ENCODE measurements at regions of chr7 and their contacts with region 1.

Region 1: GRCh38 chr7:79009647-79010046 is 443.8 kb downstream of the MAGI2 start:
- DNase-seq: no peak
- H3K4me3 ChIP-seq: no peak overlapping the region
- H3K27ac ChIP-seq: no peak overlapping the region
- H3K4me1 ChIP-seq: peaks cover 16% of the 10 kb centered on the region
- H3K27me3 ChIP-seq: no peaks in the 10 kb centered on the region
- CTCF ChIP-seq: no peak

Region 2: DNA sequence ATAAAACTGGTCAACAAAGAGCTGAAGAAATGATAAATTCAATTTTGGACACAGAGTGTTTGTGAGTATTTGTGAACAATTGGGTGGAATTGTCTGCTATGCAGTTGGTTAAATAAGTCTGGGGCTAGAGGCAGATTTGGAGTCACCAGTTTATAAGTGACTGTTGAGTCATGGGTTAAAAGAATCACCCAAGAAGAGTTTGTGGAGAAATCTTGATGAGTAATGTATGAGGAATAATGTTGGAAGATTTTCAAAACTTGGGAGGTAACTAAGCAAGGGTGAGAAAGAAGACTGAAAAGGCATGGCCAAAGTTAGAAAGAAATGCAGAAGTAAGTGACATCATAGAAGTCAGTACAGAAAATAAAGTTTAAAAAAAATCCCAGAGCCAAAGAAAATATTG is 306.9 kb before region 1 on chr7:
- CTCF ChIA-PET with region 1: no interaction called
- POLR2A ChIA-PET with region 1: no interaction called
- intact Hi-C with region 1: no loop called
- DNase-seq: no peak
- H3K4me3 ChIP-seq: no peak overlapping the region
- H3K27ac ChIP-seq: no peak overlapping the region
- H3K4me1 ChIP-seq: no peaks in the 10 kb centered on the region
- H3K27me3 ChIP-seq: no peaks in the 10 kb centered on the region
- CTCF ChIP-seq: no peak

Region 3: DNA sequence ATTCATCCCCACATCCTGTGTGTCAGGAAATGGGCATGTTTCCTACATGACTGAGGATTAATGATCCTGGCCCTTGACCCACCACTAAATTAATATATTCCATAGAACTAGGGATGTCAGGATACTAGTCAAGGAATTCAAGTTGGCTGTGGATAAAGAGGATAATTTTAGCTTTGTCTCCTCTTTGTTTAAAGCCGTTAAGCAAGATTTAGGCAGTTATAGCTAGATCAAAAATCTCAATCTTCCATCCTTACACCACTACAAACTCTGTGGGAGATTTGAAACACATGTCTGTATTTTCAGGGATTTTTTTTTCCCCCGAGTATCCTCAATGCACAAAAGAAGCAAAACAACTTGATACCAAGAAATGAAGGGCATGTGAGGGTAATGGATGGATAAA is 26.7 kb after region 1 on chr7:
- CTCF ChIA-PET with region 1: no interaction called
- POLR2A ChIA-PET with region 1: no interaction called
- intact Hi-C with region 1: loop called (anchors 2 kb)
- DNase-seq: peak; percentile 80
- H3K4me3 ChIP-seq: no peak overlapping the region
- H3K27ac ChIP-seq: no peak overlapping the region
- H3K4me1 ChIP-seq: peaks cover 11% of the 10 kb centered on the region
- H3K27me3 ChIP-seq: no peaks in the 10 kb centered on the region
- CTCF ChIP-seq: no peak

Measured in A673 (cell line).